Panc1 (cell line): ENCODE measurements at regions of chr2 and their contacts with region 1.

Region 1: DNA sequence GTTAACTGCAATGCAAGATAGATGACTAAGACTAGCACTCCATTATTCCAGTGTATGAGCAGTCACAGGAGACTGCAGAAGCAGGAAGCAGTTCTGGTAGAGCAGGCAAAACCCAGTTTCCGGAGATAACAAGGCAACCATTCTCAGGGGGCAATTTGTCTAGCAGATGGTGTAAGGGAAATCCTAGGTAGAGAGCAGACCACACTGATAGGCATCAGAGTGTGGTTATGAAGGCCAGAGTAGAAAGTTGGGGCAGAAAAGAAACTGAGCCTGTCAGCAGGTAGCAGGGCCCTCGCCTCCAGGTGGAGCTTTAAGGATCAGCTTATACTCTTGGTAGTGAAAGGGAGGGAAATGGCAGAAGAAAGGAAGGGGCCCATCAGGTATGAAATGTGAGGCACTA is 164.4 kb downstream of the PDE11A start:
- DNase-seq: no peak
- ATAC-seq: no peak
- H3K4me3 ChIP-seq: no peak overlapping the region
- H3K27ac ChIP-seq: no peak overlapping the region
- H3K4me1 ChIP-seq: 0 out of 2 replicates have a peak, but pooled peaks cover 4% of the 10 kb centered on the region
- H3K27me3 ChIP-seq: no peaks in the 10 kb centered on the region
- CTCF ChIP-seq: no peak

Region 2: GRCh38 chr2:177679611-177680605 is 228.3 kb before region 1 on chr2:
- CTCF ChIA-PET with region 1: no interaction called
- POLR2A ChIA-PET with region 1: no interaction called
- in situ Hi-C with region 1: no loop called
- intact Hi-C with region 1: no loop called
- DNase-seq: no peak
- ATAC-seq: no peak
- H3K4me3 ChIP-seq: no peak overlapping the region
- H3K27ac ChIP-seq: no peak overlapping the region
- H3K4me1 ChIP-seq: no peaks in the 10 kb centered on the region
- H3K27me3 ChIP-seq: 0 out of 2 replicates have a peak, but pooled peaks cover 2% of the 10 kb centered on the region
- CTCF ChIP-seq: no peak

Region 3: DNA sequence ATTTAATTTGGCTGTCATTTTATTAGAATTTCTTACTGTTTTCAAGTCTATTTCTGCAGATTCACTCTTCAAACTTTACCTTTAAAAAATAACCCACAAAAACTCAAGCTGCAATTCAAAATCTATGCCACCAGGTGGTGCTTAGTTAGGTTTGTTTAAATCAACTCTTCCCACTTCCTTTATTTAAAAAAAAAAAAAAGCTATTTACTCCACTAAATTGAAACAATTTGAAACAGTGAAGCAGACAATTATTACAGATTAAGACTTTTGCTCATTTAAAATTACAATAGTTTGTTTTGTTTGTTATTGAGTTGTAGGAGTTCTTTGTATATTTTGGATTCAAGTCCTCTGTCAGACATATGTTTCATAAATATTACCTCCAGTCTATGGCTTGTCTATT is 135.7 kb before region 1 on chr2:
- CTCF ChIA-PET with region 1: interaction called, 14 read pairs
- POLR2A ChIA-PET with region 1: no interaction called
- in situ Hi-C with region 1: no loop called
- intact Hi-C with region 1: no loop called
- DNase-seq: peak; percentile 18
- ATAC-seq: no peak
- H3K4me3 ChIP-seq: no peak overlapping the region
- H3K27ac ChIP-seq: no peak overlapping the region
- H3K4me1 ChIP-seq: no peaks in the 10 kb centered on the region
- H3K27me3 ChIP-seq: 0 out of 2 replicates have a peak, but pooled peaks cover 4% of the 10 kb centered on the region
- CTCF ChIP-seq: peak; percentile 70; the same call in 1 of the 2 replicates

Region 4: DNA sequence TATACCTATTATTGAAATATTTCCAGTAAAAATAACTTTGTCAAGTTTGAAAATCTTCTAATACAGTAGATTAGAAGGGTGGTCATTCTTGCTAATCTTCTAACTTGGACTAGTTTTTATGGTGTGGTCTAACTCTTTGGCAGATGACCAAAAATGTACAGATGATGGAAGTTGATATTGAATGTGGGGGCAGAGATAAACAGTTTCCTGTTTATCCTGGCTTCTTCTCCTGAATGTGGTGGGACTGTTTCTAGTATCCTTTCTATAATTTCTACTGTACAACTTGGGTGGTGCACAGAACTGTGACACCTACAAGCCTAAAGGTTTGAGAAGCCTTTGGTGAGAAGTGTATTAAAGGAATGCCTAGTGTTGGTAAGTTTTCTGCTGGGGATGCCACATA is 14.3 kb before region 1 on chr2:
- CTCF ChIA-PET with region 1: no interaction called
- POLR2A ChIA-PET with region 1: no interaction called
- in situ Hi-C with region 1: no loop called
- intact Hi-C with region 1: no loop called
- DNase-seq: no peak
- ATAC-seq: no peak
- H3K4me3 ChIP-seq: no peak overlapping the region
- H3K27ac ChIP-seq: no peak overlapping the region
- H3K4me1 ChIP-seq: no peaks in the 10 kb centered on the region
- H3K27me3 ChIP-seq: no peaks in the 10 kb centered on the region
- CTCF ChIP-seq: no peak

Region 5: DNA sequence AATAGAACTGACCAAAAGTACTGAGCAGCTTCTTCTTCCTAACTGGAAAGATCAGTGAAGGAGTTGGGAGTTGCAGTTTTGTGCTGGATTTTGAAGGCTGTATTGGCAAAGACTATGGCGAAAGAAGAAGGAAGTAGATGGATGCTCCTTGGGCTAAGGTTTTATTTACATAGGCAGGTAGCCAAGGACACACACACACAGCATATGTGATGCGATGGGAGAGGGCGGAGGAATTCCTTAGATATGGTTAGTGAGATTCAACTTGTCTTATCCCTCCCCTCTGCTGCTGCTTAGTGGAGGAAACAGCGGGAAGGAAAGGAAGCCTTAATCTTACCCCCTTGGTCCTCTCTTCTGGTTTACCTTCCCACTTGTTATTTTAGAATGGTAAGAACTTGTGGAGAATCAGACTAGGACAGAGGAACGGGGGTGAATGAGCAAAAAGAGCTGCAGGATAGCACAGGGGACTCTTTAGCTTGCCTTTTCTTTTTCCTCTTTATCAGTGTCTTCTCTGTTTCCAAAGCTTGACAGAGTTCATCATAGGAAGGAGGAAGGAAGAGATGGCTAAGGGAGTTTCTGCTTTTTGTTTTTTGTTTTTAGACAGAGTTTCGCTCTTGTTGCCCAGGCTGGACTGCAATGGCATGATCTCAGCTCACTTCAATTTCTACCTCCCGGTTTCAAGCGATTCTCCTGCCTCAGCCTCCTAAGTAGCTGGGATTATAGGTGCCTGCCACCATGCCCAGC is 374.1 kb after region 1 on chr2:
- CTCF ChIA-PET with region 1: no interaction called
- POLR2A ChIA-PET with region 1: no interaction called
- in situ Hi-C with region 1: no loop called
- intact Hi-C with region 1: no loop called
- DNase-seq: no peak
- ATAC-seq: no peak
- H3K4me3 ChIP-seq: no peak overlapping the region
- H3K27ac ChIP-seq: no peak overlapping the region
- H3K4me1 ChIP-seq: no peaks in the 10 kb centered on the region
- H3K27me3 ChIP-seq: no peaks in the 10 kb centered on the region; the same call in 1 of the 2 replicates
- CTCF ChIP-seq: no peak